Activated CD8-positive, alpha-beta T cell treated with anti-CD3 and anti-CD28 coated beads for 36 hours (primary cell): ENCODE measurements at regions of chr6 and their contacts with region 1.

Region 1: GRCh38 chr6:138692058-138692977 is 81.3 kb upstream of the CCDC28A start:
- DNase-seq: peak; percentile 61
- ATAC-seq: peak; percentile 77
- H3K4me3 Mint-ChIP-seq: peak overlapping the region; percentile 65
- H3K27ac Mint-ChIP-seq: no peak overlapping the region
- H3K4me1 Mint-ChIP-seq: peaks cover 3% of the 10 kb centered on the region
- H3K27me3 Mint-ChIP-seq: peaks cover 34% of the 10 kb centered on the region
- CTCF ChIP-seq: peak; percentile 95

Region 2: GRCh38 chr6:138588805-138589434 is 103.4 kb before region 1 on chr6:
- CTCF ChIA-PET with region 1: interaction called, 10 read pairs
- POLR2A ChIA-PET with region 1: no interaction called
- intact Hi-C with region 1: no loop called
- DNase-seq: peak; percentile 58
- ATAC-seq: peak; percentile 46
- H3K4me3 Mint-ChIP-seq: no peak overlapping the region
- H3K27ac Mint-ChIP-seq: no peak overlapping the region
- H3K4me1 Mint-ChIP-seq: peaks cover 29% of the 10 kb centered on the region
- H3K27me3 Mint-ChIP-seq: no peaks in the 10 kb centered on the region
- CTCF ChIP-seq: peak; percentile 95

Region 3: GRCh38 chr6:138673346-138674014 is 18.8 kb before region 1 on chr6:
- CTCF ChIA-PET with region 1: interaction called, 14 read pairs
- POLR2A ChIA-PET with region 1: no interaction called
- intact Hi-C with region 1: no loop called
- DNase-seq: no peak
- ATAC-seq: no peak
- H3K4me3 Mint-ChIP-seq: no peak overlapping the region
- H3K27ac Mint-ChIP-seq: no peak overlapping the region
- H3K4me1 Mint-ChIP-seq: no peaks in the 10 kb centered on the region
- H3K27me3 Mint-ChIP-seq: no peaks in the 10 kb centered on the region
- CTCF ChIP-seq: no peak

Region 4: DNA sequence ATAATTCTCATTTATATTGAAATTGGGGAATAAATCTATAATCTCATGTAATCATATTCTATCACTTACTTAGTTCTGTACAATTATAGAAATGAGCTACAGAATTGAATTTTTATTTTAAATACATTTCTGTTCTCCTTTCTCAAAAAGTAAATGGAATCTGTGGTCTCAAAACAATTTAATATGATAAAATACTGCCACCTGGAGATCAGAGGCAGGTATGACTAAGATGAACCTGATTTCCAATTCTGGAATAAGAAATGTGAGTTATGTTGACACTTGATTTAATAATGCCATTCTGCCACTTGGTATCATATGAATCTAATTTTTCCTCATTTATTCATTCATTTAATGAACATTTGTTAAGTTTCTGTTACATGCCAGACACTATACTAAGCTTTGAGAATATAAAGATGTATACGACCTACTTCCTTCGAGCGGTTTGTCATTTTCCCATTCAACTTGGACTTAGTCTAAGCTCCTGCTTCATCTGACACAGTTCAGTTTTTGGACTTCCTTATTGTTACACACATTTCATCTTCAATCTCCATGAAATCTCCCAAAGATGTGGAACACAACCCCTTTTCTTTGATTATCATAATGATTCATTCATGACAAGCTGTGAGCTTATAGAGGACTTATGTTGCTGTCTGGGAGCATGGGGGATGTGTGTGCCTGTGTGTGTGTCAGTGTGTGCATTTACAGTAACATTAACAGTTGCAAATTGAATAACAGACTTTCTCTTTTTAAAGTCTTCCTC is 73.8 kb after region 1 on chr6:
- CTCF ChIA-PET with region 1: interaction called, 41 read pairs
- POLR2A ChIA-PET with region 1: no interaction called
- intact Hi-C with region 1: loop called (anchors 5 kb)
- DNase-seq: no peak
- ATAC-seq: peak; percentile 37
- H3K4me3 Mint-ChIP-seq: no peak overlapping the region
- H3K27ac Mint-ChIP-seq: no peak overlapping the region
- H3K4me1 Mint-ChIP-seq: peaks cover 10% of the 10 kb centered on the region
- H3K27me3 Mint-ChIP-seq: no peaks in the 10 kb centered on the region
- CTCF ChIP-seq: peak; percentile 89

Region 5: DNA sequence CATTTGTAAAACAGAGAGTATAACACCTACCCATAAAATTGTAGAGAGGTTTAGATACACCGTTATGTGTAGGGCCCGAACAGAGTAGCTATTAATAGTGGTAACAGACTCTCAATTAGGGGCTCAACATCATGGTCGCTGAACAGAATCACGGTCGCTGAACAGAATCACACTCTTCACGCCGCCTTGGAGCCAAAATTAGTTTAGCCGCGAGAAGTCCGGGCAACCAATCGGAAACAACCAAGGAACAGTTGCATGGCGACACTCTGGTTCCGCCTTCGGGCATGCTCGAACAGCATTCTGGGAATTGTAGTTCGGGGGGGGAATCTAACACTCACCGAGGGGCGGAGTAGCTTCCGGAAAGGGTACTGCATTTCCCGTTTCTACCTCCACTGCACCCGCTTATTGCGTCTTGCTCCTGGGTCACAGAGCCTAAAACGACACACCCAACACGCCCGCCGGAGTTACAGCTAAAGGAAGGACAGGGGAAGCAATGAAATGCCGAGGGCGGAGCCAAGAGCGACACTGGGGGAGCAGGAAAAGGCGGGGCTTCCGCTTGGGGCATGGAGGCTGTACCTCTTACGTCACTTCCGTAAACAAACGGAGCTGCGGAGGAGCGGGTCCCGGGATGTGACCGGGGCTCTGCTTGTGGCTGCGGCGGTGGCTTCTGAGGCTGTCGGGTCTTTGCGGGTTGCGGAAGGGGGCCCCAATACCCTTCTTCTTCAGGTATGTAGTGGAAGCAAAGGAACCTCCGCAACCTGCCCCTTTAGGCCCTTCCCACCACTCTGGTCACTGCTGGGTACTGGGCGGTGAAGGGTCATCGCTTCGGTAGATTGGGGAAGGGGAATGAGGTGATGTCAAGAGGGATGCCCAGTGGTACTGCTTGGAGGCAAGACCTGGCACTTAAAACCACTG is 81.1 kb after region 1 on chr6 and contains the start of gene CCDC28A:
- CTCF ChIA-PET with region 1: interaction called, 11 read pairs
- POLR2A ChIA-PET with region 1: no interaction called
- intact Hi-C with region 1: loop called (anchors 5 kb)
- DNase-seq: peak; percentile 96
- ATAC-seq: peak; percentile 89
- H3K4me3 Mint-ChIP-seq: peak within 1 kb of the TSS; percentile 99
- H3K27ac Mint-ChIP-seq: peak within 1 kb of the TSS; percentile 100
- H3K4me1 Mint-ChIP-seq: peaks cover 28% of the 10 kb centered on the region
- H3K27me3 Mint-ChIP-seq: no peaks in the 10 kb centered on the region
- CTCF ChIP-seq: no peak
- total RNA-seq, gene CCDC28A: 15.0 to 15.7 TPM